Naive thymus-derived CD8-positive, alpha-beta T cell (primary cell): ENCODE measurements at regions of chr11 and their contacts with region 1.

Region 1: GRCh38 chr11:119236490-119236889 is 30.4 kb downstream of the CBL start:
- DNase-seq: no peak
- ATAC-seq: no peak
- H3K4me3 Mint-ChIP-seq: no peak overlapping the region
- H3K27ac Mint-ChIP-seq: peak overlapping the region in 3 of 10 donors; percentile 38 to 63 (median 53)
- H3K4me1 Mint-ChIP-seq: peaks cover 25 to 51% (median 40%) of the 10 kb centered on the region in 4 donors
- H3K27me3 Mint-ChIP-seq: no peaks in the 10 kb centered on the region

Region 2: GRCh38 chr11:119196833-119197483 is 39.5 kb before region 1 on chr11:
- POLR2A ChIA-PET with region 1: no interaction called
- DNase-seq: peak; percentile 26 to 86 (median 69)
- ATAC-seq: peak; percentile 97 to 99
- H3K4me3 Mint-ChIP-seq: no peak overlapping the region
- H3K27ac Mint-ChIP-seq: peak overlapping the region in 1 of 10 donors; percentile 0
- H3K4me1 Mint-ChIP-seq: peaks cover 4 to 7% (median 6%) of the 10 kb centered on the region in 4 donors
- H3K27me3 Mint-ChIP-seq: no peaks in the 10 kb centered on the region

Region 3: DNA sequence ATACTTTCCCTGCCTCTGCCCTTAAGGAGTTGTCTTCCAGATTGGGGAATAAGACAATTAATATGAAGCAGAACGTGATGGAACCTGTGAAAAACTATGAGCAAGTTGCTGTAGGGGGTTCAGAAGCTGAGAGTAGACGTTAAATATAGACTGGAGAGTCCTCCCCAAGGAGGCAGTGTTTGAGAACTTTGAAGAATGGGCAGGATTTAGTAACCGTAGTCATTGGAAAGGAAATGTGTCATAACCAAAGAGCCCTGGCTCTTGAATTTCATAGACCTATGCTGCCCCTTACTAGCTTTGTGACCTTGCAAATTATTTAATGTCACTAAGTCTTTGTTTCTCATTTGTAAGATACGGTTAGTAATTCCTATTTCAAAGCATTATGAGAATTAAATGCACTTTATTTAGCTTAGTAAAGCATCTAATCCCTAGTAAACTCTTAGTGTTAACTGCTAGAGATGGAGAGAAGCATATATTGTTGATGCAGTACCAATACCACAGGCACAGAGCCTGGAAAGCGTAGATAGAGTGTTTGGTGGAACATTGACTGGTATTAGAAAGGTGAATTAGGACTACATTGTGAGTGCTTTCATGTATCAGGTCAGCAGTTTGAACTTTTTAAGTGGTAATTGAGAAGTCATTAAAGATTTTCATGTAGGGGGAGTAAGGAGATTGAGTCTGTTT is 26.3 kb after region 1 on chr11:
- POLR2A ChIA-PET with region 1: interaction called, 17 read pairs
- DNase-seq: no peak
- ATAC-seq: no peak
- H3K4me3 Mint-ChIP-seq: no peak overlapping the region
- H3K27ac Mint-ChIP-seq: no peak overlapping the region
- H3K4me1 Mint-ChIP-seq: peaks cover 17 to 56% (median 32%) of the 10 kb centered on the region in 4 donors
- H3K27me3 Mint-ChIP-seq: no peaks in the 10 kb centered on the region